Panc1 (cell line): ENCODE measurements at regions of chr22 and their contacts with region 1.

Region 1: DNA sequence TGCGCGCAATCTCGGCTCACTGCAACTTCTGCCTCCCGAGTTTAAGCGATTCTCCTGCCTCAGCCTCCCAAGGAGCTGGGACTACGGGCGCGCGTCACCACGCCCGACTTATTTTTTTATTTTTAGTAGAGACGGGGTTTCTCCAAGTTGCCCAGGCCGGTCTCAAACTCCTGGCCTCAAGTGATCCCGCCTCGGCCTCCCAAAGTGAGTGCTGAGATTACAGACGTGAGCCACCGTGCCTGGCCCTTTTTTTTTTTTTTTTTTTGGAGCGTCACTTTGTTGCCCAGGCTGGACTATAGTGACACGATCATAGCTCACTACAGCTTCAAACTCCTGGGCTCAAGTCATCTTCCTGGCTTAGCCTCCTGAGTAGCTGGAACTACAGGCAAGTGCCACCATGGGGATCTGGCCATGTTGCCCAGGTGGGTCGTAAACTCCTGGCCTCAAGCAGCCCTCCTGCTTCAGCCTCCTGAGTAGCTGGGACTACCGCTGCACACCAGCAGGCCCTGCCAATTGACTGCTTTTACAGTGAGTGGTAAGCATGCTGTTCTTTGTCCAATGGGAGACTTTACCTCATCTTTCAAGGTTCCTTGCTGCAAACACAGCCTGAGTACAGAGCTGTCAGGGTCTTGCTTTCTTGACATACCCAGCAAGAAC is 600 bp upstream of the CENPM start:
- DNase-seq: no peak
- ATAC-seq: no peak
- H3K4me3 ChIP-seq: peak overlapping the region; percentile 69 to 82
- H3K27ac ChIP-seq: peak overlapping the region; percentile 86
- H3K4me1 ChIP-seq: peaks cover 9% of the 10 kb centered on the region
- H3K27me3 ChIP-seq: no peaks in the 10 kb centered on the region
- CTCF ChIP-seq: no peak

Region 2: GRCh38 chr22:40965936-40966725 is 981.4 kb before region 1 on chr22:
- CTCF ChIA-PET with region 1: no interaction called
- POLR2A ChIA-PET with region 1: no interaction called
- in situ Hi-C with region 1: no loop called
- intact Hi-C with region 1: no loop called
- DNase-seq: no peak
- ATAC-seq: no peak
- H3K4me3 ChIP-seq: no peak overlapping the region
- H3K27ac ChIP-seq: no peak overlapping the region
- H3K4me1 ChIP-seq: no peaks in the 10 kb centered on the region
- H3K27me3 ChIP-seq: no peaks in the 10 kb centered on the region
- CTCF ChIP-seq: no peak

Region 3: DNA sequence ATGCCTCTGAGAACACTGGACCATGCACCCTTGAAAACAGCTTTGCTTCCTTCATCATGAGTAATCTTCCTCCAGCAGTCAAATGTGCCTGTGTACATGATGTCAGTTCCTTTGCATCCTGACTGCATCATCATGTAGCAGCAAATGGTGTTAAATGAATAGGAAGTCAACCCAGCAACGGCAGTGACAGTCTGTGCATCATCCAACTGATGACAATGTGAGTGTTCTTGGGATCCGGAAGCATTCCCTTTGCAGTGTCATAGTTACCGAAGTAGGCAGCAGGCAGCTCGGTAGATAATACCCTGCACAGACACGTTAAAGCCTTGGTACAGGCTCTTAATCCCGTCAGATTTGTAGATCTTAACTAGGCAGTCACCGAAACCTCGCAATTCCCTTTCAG is 53.6 kb after region 1 on chr22:
- CTCF ChIA-PET with region 1: no interaction called
- POLR2A ChIA-PET with region 1: interaction called, 11 read pairs
- in situ Hi-C with region 1: no loop called
- intact Hi-C with region 1: no loop called
- DNase-seq: no peak
- ATAC-seq: no peak
- H3K4me3 ChIP-seq: no peak overlapping the region
- H3K27ac ChIP-seq: no peak overlapping the region
- H3K4me1 ChIP-seq: no peaks in the 10 kb centered on the region
- H3K27me3 ChIP-seq: no peaks in the 10 kb centered on the region
- CTCF ChIP-seq: no peak